ENCODE measurements at regions of chr7 and their contacts with region 1.

Region 1: GRCh38 chr7:116862234-116862950 is at the start of gene CAPZA2:
- DNase-seq: peak; percentile 82 to 90
- ATAC-seq: peak; percentile 93
- H3K4me3 ChIP-seq: peak within 1 kb of the TSS; percentile 67 to 94 (median 82)
- H3K27ac ChIP-seq: peak within 1 kb of the TSS; percentile 92 to 99 (median 96)
- H3K4me1 ChIP-seq: peaks cover 29 to 38% of the 10 kb centered on the region in 2 donors
- H3K27me3 ChIP-seq: no peaks in the 10 kb centered on the region
- CTCF ChIP-seq: peak; percentile 52 to 94 (median 82)
- POLR2A ChIP-seq: peak; percentile 83 to 90
- total RNA-seq, gene CAPZA2: 110 to 158 (median 137) TPM

Region 2: GRCh38 chr7:116786791-116787443 is 75.5 kb before region 1 on chr7:
- in situ Hi-C with region 1: no loop called
- intact Hi-C with region 1: no loop called
- DNase-seq: no peak
- ATAC-seq: peak; percentile 40 to 51
- H3K4me3 ChIP-seq: no peak overlapping the region
- H3K27ac ChIP-seq: peak overlapping the region; percentile 41 to 71 (median 54)
- H3K4me1 ChIP-seq: peaks cover 23 to 24% of the 10 kb centered on the region in 2 donors
- H3K27me3 ChIP-seq: no peaks in the 10 kb centered on the region
- CTCF ChIP-seq: peak in 1 of 5 experiments; percentile 11
- POLR2A ChIP-seq: no peak

Region 3: GRCh38 chr7:116953727-116954442 is 91.5 kb after region 1 on chr7:
- in situ Hi-C with region 1: loop called in 1 of 4 experiments (anchors 10 kb)
- intact Hi-C with region 1: loop called (anchors 2 kb)
- DNase-seq: peak; percentile 43 to 62
- ATAC-seq: peak; percentile 82 to 86
- H3K4me3 ChIP-seq: peak overlapping the region; percentile 74 to 88 (median 83)
- H3K27ac ChIP-seq: peak overlapping the region; percentile 94 to 98 (median 96)
- H3K4me1 ChIP-seq: peaks cover 29 to 33% of the 10 kb centered on the region in 2 donors
- H3K27me3 ChIP-seq: no peaks in the 10 kb centered on the region
- CTCF ChIP-seq: no peak
- POLR2A ChIP-seq: peak; percentile 68 to 79

Region 4: DNA sequence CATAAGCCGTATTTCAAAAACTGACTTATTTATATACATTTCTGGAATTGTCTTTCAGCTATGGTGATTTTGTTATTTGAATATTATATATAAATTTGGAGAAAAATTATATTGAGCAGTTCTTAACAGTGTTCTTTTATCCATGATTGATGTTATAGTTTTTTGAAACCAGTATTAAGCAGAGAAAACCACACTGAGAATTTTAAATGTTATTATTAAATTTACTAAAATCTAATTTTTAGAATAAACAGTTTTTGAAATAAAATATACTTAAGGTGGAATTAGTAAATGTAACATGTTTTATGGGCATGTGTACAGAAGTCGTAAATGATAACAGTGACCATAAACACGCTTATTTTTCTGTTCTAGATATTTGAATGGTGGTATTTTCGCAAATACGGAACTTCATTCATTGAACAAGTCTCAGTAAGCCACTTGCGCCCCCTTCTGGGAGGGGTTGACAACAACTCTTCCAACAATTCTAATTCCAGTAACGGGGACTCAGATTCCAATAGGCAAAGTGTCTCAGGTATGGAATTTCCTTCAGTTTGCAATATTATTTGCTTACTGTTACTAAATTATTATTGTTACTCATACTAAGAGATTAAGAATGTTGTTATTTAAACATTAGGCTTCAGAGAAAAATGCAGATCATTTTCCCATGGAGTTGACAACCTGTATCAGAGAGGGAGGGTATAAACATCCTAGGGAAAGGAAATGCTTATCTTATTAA is 257.0 kb after region 1 on chr7:
- in situ Hi-C with region 1: no loop called
- intact Hi-C with region 1: loop called (anchors 5 kb)
- DNase-seq: peak; percentile 43 to 67
- ATAC-seq: peak in 1 of 2 donors; percentile 65
- H3K4me3 ChIP-seq: no peak overlapping the region
- H3K27ac ChIP-seq: no peak overlapping the region
- H3K4me1 ChIP-seq: peaks cover 8 to 23% of the 10 kb centered on the region in 2 donors
- H3K27me3 ChIP-seq: no peaks in the 10 kb centered on the region
- CTCF ChIP-seq: peak; percentile 75 to 90 (median 81)
- POLR2A ChIP-seq: no peak